ENCODE measurements at regions of chr1 and their contacts with region 1.

Region 1: GRCh38 chr1:15128520-15129313 is 24.8 kb upstream of the TMEM51 start:
- DNase-seq: peak; percentile 34 to 77 (median 59)
- ATAC-seq: peak; percentile 74
- H3K4me3 ChIP-seq: no peak overlapping the region
- H3K4me3 Mint-ChIP-seq: no peak overlapping the region
- H3K27ac ChIP-seq: no peak overlapping the region
- H3K27ac Mint-ChIP-seq: no peak overlapping the region
- H3K4me1 ChIP-seq: no peaks in the 10 kb centered on the region
- H3K4me1 Mint-ChIP-seq: no peaks in the 10 kb centered on the region
- H3K27me3 ChIP-seq: peaks cover 3 to 13% of the 10 kb centered on the region in 2 experiments
- H3K27me3 Mint-ChIP-seq: peaks cover 17% of the 10 kb centered on the region
- CTCF ChIP-seq: peak; percentile 86

Region 2: DNA sequence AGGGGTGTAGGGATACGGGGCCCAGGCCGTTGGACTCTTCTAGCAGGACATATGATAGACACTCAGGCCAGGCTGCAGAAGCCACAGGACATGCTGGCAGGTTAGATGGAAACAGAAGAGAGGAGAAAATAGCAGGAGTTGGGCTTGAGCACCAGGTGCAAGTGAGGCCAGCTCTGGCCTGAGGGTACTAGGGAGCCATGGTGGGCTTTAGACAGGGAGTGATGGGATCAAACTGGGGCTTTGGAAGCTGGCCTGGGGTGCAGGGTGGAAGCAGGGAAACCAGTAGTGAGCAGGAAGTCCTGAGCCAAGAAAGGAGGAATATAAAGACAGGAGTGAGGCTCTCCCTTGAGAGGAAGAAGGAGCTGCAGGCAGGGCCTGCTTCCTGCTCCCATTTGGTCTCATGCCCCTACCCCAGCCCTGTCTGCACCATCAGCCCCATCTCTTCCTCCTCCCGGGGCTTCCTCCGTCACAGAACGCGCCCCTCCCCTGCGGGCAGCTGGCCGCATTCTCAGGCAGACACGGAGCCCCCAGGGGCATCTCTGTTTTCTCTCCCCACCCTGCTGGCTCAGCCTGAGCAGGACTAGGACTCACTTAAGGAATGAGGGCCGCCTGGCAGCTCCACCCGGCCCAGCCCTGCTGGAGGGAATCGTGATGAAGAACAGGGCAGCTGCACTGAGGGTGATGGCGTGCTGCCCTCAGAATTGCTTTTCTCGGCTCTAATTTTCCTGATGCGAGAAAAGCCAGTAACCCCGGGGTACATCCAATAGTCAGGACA is 140.7 kb before region 1 on chr1:
- CTCF ChIA-PET with region 1: no interaction called
- POLR2A ChIA-PET with region 1: no interaction called
- intact Hi-C with region 1: no loop called
- DNase-seq: no peak
- ATAC-seq: no peak
- H3K4me3 ChIP-seq: no peak overlapping the region
- H3K4me3 Mint-ChIP-seq: no peak overlapping the region
- H3K27ac ChIP-seq: no peak overlapping the region
- H3K27ac Mint-ChIP-seq: no peak overlapping the region
- H3K4me1 ChIP-seq: no peaks in the 10 kb centered on the region
- H3K4me1 Mint-ChIP-seq: no peaks in the 10 kb centered on the region
- H3K27me3 ChIP-seq: no peaks in the 10 kb centered on the region
- H3K27me3 Mint-ChIP-seq: no peaks in the 10 kb centered on the region
- CTCF ChIP-seq: no peak

Region 3: DNA sequence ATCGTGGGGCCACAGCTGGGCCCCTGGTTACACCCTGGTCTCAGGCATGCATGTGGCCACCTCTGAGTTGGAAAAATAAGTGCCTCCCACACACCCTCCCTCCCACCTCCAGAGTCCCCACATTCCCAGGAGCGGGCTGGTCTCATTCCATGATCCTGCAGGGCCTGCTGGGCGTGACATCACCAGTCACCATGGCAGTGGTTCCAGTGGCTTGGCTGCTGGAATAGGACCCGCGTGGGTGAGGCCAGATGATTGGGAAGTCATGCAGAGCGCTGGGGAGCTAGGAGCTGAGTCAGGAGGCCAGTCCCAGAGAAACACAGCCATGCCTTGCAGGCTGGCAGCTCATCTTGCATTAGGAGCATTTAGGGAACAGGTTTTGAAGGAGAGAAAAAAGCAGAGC is 100.6 kb before region 1 on chr1:
- CTCF ChIA-PET with region 1: no interaction called
- POLR2A ChIA-PET with region 1: no interaction called
- intact Hi-C with region 1: no loop called
- DNase-seq: no peak
- ATAC-seq: no peak
- H3K4me3 ChIP-seq: no peak overlapping the region
- H3K4me3 Mint-ChIP-seq: no peak overlapping the region
- H3K27ac ChIP-seq: no peak overlapping the region
- H3K27ac Mint-ChIP-seq: no peak overlapping the region
- H3K4me1 ChIP-seq: no peaks in the 10 kb centered on the region
- H3K4me1 Mint-ChIP-seq: no peaks in the 10 kb centered on the region
- H3K27me3 ChIP-seq: no peaks in the 10 kb centered on the region
- H3K27me3 Mint-ChIP-seq: no peaks in the 10 kb centered on the region
- CTCF ChIP-seq: no peak

Region 4: GRCh38 chr1:15272009-15272788 is 143.5 kb after region 1 on chr1:
- CTCF ChIA-PET with region 1: no interaction called
- POLR2A ChIA-PET with region 1: no interaction called
- intact Hi-C with region 1: loop called (anchors 1 kb)
- DNase-seq: peak in 4 of 14 experiments; percentile 18 to 63 (median 41)
- ATAC-seq: peak; percentile 58
- H3K4me3 ChIP-seq: no peak overlapping the region
- H3K4me3 Mint-ChIP-seq: no peak overlapping the region
- H3K27ac ChIP-seq: no peak overlapping the region
- H3K27ac Mint-ChIP-seq: no peak overlapping the region
- H3K4me1 ChIP-seq: no peaks in the 10 kb centered on the region
- H3K4me1 Mint-ChIP-seq: no peaks in the 10 kb centered on the region
- H3K27me3 ChIP-seq: peaks cover 9 to 10% of the 10 kb centered on the region in 2 experiments
- H3K27me3 Mint-ChIP-seq: peaks cover 46% of the 10 kb centered on the region
- CTCF ChIP-seq: no peak

Region 5: DNA sequence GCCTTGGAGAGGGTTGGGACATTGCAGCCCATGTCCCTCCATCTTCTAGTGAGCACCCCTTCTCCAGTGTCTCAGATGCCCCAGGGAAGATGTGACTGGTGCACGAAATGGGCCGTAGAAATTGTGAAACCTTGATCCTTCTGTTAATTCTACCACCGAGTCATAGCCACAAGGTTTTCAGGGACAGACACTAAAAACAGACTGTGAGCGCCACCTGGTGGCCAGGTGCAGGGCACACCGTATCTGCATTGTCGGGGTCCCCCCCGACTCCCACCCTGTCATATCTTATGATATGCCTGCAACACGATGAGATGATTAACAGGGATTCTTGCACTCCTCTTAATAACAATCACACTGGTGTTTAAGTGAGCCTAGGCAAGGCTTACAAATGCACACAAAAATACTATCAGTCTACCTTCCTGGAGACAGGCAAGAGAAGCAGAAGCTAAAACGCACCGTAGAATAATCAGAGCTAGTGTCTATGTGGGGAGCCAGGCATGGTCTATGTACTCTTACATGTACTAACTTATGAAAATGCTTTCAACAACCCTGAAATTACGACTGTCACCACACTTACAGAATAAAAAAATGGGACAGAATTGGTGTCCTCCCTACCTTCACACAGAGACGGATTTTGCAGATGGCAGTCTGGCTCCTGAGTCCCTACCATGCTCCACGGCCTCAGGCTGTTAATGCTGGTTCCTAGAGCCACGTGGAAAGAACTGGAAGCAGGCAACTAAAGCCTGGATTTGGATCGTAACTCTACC is 176.2 kb after region 1 on chr1:
- CTCF ChIA-PET with region 1: interaction called, 3 read pairs
- POLR2A ChIA-PET with region 1: no interaction called
- intact Hi-C with region 1: loop called in 1 of 2 experiments (anchors 1 kb)
- DNase-seq: peak; percentile 44 to 77 (median 60)
- ATAC-seq: peak; percentile 49
- H3K4me3 ChIP-seq: no peak overlapping the region
- H3K4me3 Mint-ChIP-seq: no peak overlapping the region
- H3K27ac ChIP-seq: no peak overlapping the region
- H3K27ac Mint-ChIP-seq: no peak overlapping the region
- H3K4me1 ChIP-seq: no peaks in the 10 kb centered on the region
- H3K4me1 Mint-ChIP-seq: no peaks in the 10 kb centered on the region
- H3K27me3 ChIP-seq: no peaks in the 10 kb centered on the region
- H3K27me3 Mint-ChIP-seq: peaks cover 5% of the 10 kb centered on the region
- CTCF ChIP-seq: peak; percentile 89